A673 (cell line): ENCODE measurements at regions of chr11 and their contacts with region 1.

Region 1: GRCh38 chr11:62841361-62842184 is 2.2 kb upstream of the WDR74 start:
- DNase-seq: peak; percentile 100
- H3K4me3 ChIP-seq: peak overlapping the region; percentile 44
- H3K27ac ChIP-seq: peak overlapping the region; percentile 99
- H3K4me1 ChIP-seq: peaks cover 17% of the 10 kb centered on the region
- H3K27me3 ChIP-seq: no peaks in the 10 kb centered on the region
- CTCF ChIP-seq: no peak

Region 2: DNA sequence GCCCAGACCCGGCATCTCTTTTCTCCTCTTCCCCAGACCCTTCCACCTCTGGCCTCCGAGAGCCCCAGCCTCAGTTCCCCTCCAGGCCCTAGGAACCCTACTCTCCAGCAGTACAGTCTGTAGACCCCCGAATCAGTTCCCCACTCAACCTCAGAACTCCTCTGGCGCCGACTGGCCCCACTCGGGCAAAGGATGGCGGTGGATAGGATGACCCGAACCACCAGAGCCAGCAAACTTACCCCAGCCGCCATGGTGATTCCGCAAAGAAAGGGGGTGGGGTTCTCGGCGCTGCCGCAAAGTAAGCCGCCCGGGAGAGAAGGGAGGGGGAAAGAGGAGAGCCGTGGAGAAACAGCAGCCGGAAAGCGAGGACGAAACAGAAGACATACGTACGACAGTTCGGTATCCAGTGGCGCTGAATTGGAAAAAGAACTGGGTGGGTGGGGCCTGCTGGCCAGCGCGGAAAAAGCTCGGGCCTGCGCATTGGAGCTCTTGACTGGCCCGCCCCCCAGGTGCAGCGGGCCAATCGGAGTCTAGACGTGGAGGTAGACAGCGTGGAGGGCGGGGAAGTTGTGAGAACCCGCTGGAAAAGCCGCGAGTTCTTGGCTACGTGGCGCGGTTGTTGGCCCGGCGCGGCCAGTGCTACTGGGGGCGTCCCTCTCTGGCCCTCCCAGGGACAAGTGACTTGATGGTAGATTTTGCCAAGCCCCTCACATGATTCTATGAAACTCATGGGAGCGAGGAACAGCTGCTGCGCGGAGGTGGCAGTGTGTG is 267.8 kb before region 1 on chr11 and contains the start of gene EEF1G:
- CTCF ChIA-PET with region 1: no interaction called
- POLR2A ChIA-PET with region 1: interaction called, 16 read pairs
- intact Hi-C with region 1: no loop called
- DNase-seq: peak; percentile 100
- H3K4me3 ChIP-seq: peak within 1 kb of the TSS; percentile 65
- H3K27ac ChIP-seq: peak within 1 kb of the TSS; percentile 88
- H3K4me1 ChIP-seq: peaks cover 31% of the 10 kb centered on the region
- H3K27me3 ChIP-seq: no peaks in the 10 kb centered on the region
- CTCF ChIP-seq: no peak
- total RNA-seq, gene EEF1G: 1,804 and 1,817 TPM in 2 replicates

Region 3: DNA sequence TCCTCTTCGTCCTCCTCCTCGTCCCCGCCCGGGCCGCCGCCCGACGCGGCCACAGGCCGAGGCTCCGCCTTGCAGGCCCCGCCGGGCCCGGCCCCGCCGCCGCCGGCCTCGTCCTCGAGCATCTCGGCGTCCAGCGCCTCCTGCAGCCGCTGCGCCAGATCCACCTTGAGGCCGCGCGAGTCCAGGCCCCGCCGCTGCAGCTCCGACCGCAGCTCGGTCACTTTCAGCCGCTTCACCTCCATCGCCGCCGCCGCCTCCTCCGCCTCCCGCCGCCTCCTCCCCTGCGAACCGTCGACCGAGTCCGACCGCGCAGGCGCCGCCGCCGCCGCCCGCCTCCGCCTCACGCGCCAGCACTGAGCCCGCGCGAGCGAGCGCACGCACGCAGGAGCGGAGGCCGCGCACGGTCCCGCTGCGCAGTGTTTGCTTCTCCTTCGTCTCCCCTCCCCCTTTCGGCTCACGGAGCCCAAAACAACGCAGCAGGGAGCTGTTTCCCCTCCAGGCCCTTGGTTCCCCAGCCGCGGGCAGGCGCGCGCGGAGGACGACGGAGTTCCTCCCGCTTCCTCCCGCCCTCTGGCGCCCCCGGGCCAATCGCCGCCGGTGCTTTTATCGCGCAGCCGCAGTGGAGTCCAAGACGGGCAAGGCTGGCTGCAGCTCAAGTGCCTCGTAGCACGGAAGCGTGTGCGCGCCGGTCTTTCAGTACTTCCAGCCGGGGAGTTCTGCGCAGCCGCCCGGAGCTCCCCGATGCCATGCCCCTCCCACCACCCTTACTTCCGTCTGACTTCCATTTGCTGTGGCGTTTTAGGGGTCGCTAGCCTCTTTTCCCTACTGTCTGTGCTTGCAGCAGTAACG is 114.4 kb before region 1 on chr11 and contains the start of gene HNRNPUL2:
- CTCF ChIA-PET with region 1: no interaction called
- POLR2A ChIA-PET with region 1: interaction called, 12 read pairs
- intact Hi-C with region 1: loop called (anchors 1 kb)
- DNase-seq: peak; percentile 100
- H3K4me3 ChIP-seq: peak within 1 kb of the TSS; percentile 86
- H3K27ac ChIP-seq: peak within 1 kb of the TSS; percentile 98
- H3K4me1 ChIP-seq: peaks cover 11% of the 10 kb centered on the region
- H3K27me3 ChIP-seq: no peaks in the 10 kb centered on the region
- CTCF ChIP-seq: no peak
- total RNA-seq, gene HNRNPUL2: 104 and 105 TPM in 2 replicates

Region 4: GRCh38 chr11:62753736-62754603 is 87.6 kb before region 1 on chr11 and contains the start of gene ZBTB3:
- CTCF ChIA-PET with region 1: no interaction called
- POLR2A ChIA-PET with region 1: interaction called, 23 read pairs
- intact Hi-C with region 1: no loop called
- DNase-seq: peak; percentile 100
- H3K4me3 ChIP-seq: peak within 1 kb of the TSS; percentile 62
- H3K27ac ChIP-seq: peak within 1 kb of the TSS; percentile 88
- H3K4me1 ChIP-seq: peaks cover 6% of the 10 kb centered on the region
- H3K27me3 ChIP-seq: no peaks in the 10 kb centered on the region
- CTCF ChIP-seq: no peak
- total RNA-seq, gene ZBTB3: 12.0 and 13.1 TPM in 2 replicates

Region 5: DNA sequence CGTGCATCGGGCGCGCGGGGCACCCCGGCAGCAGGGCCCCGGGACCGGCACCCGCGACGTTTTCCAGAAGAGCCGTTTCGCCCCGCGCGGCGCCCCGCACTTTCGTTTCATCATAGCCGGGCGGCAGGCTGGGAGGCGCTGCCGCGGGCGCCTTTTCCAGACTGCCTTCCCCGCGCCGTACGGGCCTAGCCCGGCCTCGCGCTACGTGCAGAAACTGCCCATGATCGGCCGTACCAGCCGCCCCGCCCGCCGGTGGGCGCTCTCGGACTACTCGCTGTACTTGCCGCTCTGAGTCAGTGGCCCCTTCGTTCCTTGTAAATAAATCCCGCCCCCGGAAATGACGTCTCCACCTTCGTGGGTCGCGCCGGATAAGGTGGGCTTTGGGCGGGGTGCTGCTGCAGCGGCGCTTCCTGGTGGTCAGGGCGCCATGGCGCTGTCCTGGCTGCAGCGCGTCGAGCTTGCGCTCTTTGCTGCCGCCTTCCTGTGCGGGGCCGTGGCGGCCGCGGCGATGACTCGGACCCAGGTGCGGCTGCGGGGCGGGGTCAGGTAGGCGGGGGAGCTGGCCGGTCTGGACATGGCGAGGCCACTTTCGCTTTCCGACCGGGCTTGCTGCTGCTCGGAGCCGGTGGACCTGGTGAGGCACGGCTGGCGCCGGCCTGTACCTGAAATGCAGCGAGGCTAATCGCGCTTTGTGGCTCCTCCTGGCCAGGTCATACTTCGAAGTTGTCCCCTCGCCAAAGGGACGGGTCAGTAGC is 54.4 kb before region 1 on chr11 and contains the start of gene TMEM179B:
- CTCF ChIA-PET with region 1: interaction called, 4 read pairs
- POLR2A ChIA-PET with region 1: interaction called, 4 read pairs
- intact Hi-C with region 1: loop called (anchors 5 kb)
- DNase-seq: peak; percentile 100
- H3K4me3 ChIP-seq: peak within 1 kb of the TSS; percentile 74
- H3K27ac ChIP-seq: peak within 1 kb of the TSS; percentile 92
- H3K4me1 ChIP-seq: peaks cover 25% of the 10 kb centered on the region
- H3K27me3 ChIP-seq: no peaks in the 10 kb centered on the region
- CTCF ChIP-seq: peak; percentile 64
- total RNA-seq, gene TMEM179B: 46.6 and 52.1 TPM in 2 replicates

Region 6: DNA sequence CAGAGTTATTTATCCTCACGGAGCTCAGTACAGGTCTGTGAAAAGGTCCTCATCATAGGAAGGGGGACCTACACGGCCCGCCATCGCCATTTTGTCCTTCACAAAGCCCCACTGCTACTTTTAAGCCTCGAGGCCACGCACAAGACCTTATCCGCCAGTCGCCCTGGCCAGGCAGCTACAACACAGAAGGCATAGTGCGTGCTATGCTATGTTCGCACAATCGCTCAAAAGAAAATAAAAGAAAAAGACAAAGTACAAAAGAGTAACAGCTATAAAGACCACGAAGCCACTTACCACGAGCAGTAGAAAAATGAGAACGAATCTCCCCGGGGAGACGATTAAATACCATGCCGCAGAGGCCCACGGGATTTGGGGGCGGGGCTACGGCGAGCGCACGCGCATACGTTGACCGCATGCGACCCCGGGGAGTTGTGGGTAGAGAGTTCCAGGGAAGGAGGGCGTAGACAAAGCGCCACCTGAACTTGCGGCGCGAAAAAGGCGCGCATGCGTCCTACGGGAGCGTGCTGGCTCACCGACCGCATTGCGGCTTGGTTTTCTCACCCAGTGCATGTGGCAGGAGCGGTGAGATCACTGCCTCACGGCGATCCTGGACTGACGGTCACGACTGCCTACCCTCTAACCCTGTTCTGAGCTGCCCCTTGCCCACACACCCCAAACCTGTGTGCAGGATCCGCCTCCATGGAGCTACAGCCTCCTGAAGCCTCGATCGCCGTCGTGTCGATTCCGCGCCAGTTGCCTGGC is 14.2 kb after region 1 on chr11:
- CTCF ChIA-PET with region 1: no interaction called
- POLR2A ChIA-PET with region 1: interaction called, 27 read pairs
- intact Hi-C with region 1: no loop called
- DNase-seq: peak; percentile 99
- H3K4me3 ChIP-seq: peak overlapping the region; percentile 70
- H3K27ac ChIP-seq: peak overlapping the region; percentile 92
- H3K4me1 ChIP-seq: peaks cover 13% of the 10 kb centered on the region
- H3K27me3 ChIP-seq: no peaks in the 10 kb centered on the region
- CTCF ChIP-seq: no peak

Region 7: DNA sequence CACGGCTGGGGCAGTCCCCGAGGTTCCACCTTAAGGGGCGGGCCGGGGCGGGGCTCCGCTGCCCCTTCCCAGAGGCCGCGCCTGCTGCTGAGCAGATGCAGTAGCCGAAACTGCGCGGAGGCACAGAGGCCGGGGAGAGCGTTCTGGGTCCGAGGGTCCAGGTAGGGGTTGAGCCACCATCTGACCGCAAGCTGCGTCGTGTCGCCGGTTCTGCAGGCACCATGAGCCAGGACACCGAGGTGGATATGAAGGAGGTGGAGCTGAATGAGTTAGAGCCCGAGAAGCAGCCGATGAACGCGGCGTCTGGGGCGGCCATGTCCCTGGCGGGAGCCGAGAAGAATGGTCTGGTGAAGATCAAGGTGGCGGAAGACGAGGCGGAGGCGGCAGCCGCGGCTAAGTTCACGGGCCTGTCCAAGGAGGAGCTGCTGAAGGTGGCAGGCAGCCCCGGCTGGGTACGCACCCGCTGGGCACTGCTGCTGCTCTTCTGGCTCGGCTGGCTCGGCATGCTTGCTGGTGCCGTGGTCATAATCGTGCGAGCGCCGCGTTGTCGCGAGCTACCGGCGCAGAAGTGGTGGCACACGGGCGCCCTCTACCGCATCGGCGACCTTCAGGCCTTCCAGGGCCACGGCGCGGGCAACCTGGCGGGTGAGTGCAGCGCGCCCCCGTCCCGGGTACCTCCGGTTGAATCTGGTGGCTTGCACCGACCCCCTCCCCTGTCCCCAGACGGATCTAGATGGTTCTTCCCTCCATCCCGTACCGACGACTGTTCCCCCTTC is 39.4 kb after region 1 on chr11 and contains the start of gene SLC3A2:
- CTCF ChIA-PET with region 1: interaction called, 11 read pairs
- POLR2A ChIA-PET with region 1: interaction called, 7 read pairs
- intact Hi-C with region 1: loop called (anchors 1 kb)
- DNase-seq: peak; percentile 94
- H3K4me3 ChIP-seq: peak within 1 kb of the TSS; percentile 72
- H3K27ac ChIP-seq: peak within 1 kb of the TSS; percentile 98
- H3K4me1 ChIP-seq: peaks cover 46% of the 10 kb centered on the region
- H3K27me3 ChIP-seq: no peaks in the 10 kb centered on the region
- CTCF ChIP-seq: peak; percentile 92
- total RNA-seq, gene SLC3A2: 480 and 511 TPM in 2 replicates